Activated CD8-positive, alpha-beta T cell treated with anti-CD3 and anti-CD28 coated beads for 36 hours (primary cell): ENCODE measurements at regions of chr2 and their contacts with region 1.

Region 1: GRCh38 chr2:96554293-96555145 is 18.0 kb downstream of the ARID5A start:
- DNase-seq: peak; percentile 74
- ATAC-seq: peak; percentile 71
- H3K4me3 Mint-ChIP-seq: no peak overlapping the region
- H3K27ac Mint-ChIP-seq: peak overlapping the region; percentile 46
- H3K4me1 Mint-ChIP-seq: peaks cover 26% of the 10 kb centered on the region
- H3K27me3 Mint-ChIP-seq: no peaks in the 10 kb centered on the region
- CTCF ChIP-seq: peak; percentile 98

Region 2: DNA sequence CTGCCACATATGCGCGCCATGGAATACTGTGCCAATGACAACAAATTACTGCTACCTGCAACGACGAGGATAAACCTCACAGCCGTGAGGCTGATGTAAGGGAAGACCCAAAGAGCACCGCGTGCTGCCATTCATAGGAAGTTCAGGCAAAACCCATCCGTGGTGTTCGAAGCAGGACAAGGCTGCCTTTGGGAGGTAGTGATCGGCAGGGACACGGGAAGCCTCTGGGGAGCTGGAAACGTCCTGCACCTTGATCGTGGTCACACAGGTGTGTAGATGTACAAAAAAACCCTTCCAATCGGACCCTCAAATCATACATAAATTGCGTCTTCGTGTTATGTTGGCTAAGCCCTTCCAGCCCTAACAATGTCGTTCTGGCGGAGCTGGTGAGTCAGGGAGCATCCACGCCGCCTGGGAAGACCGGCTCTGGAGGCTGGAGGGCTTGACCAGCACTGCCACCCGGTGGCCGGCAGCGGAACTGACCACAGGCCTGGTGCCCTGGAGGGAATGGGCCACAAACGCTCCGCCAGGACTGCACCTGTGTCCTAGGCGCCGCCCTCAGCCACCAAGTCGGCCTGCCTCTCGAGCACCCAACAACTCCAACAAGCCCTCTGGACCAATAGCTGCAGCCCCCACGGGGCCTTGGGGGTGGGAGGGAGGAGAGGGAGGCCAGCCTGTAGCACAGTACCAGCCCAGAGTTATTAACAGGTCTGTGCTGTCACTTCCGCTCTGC is 45.2 kb before region 1 on chr2:
- CTCF ChIA-PET with region 1: interaction called, 14 read pairs
- POLR2A ChIA-PET with region 1: interaction called, 3 read pairs
- intact Hi-C with region 1: no loop called
- DNase-seq: peak; percentile 80
- ATAC-seq: peak; percentile 57
- H3K4me3 Mint-ChIP-seq: no peak overlapping the region
- H3K27ac Mint-ChIP-seq: no peak overlapping the region
- H3K4me1 Mint-ChIP-seq: peaks cover 9% of the 10 kb centered on the region
- H3K27me3 Mint-ChIP-seq: peaks cover 16% of the 10 kb centered on the region
- CTCF ChIP-seq: peak; percentile 94

Region 3: GRCh38 chr2:96536445-96537065 is 18.0 kb before region 1 on chr2 and contains the start of gene ARID5A:
- CTCF ChIA-PET with region 1: interaction called, 46 read pairs
- POLR2A ChIA-PET with region 1: interaction called, 438 read pairs
- intact Hi-C with region 1: no loop called
- DNase-seq: peak; percentile 97
- ATAC-seq: peak; percentile 64
- H3K4me3 Mint-ChIP-seq: peak within 1 kb of the TSS; percentile 87
- H3K27ac Mint-ChIP-seq: peak within 1 kb of the TSS; percentile 97
- H3K4me1 Mint-ChIP-seq: peaks cover 54% of the 10 kb centered on the region
- H3K27me3 Mint-ChIP-seq: no peaks in the 10 kb centered on the region
- CTCF ChIP-seq: peak; percentile 81
- total RNA-seq, gene ARID5A: 61.5 to 64.3 TPM

Region 4: DNA sequence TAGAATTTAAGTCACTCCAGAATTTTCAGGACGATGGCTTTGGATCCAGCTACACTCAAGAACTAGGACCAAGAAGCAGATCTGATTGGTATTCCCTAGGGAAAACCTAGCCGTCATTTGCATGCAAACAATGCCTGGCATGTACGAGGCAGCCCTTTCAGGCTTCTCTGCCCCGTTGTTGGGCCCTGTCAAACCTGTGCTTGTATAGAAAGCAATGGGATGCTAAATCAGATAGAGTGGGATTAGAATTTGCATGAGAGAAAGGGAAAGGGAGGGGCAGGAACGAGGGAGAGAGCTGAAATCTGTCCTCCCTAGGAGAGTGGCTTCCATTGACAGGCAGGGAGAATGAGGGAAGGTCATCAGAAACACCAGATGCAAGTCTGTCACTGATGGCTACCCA is 10.6 kb after region 1 on chr2:
- CTCF ChIA-PET with region 1: interaction called, 20 read pairs
- POLR2A ChIA-PET with region 1: no interaction called
- intact Hi-C with region 1: no loop called
- DNase-seq: no peak
- ATAC-seq: no peak
- H3K4me3 Mint-ChIP-seq: no peak overlapping the region
- H3K27ac Mint-ChIP-seq: no peak overlapping the region
- H3K4me1 Mint-ChIP-seq: no peaks in the 10 kb centered on the region
- H3K27me3 Mint-ChIP-seq: no peaks in the 10 kb centered on the region
- CTCF ChIP-seq: no peak

Region 5: GRCh38 chr2:96907115-96908041 is 352.9 kb after region 1 on chr2:
- CTCF ChIA-PET with region 1: no interaction called
- POLR2A ChIA-PET with region 1: no interaction called
- intact Hi-C with region 1: no loop called
- DNase-seq: no peak
- ATAC-seq: no peak
- H3K4me3 Mint-ChIP-seq: no peak overlapping the region
- H3K27ac Mint-ChIP-seq: no peak overlapping the region
- H3K4me1 Mint-ChIP-seq: peaks cover 10% of the 10 kb centered on the region
- H3K27me3 Mint-ChIP-seq: no peaks in the 10 kb centered on the region
- CTCF ChIP-seq: no peak